HEK293 (cell line): ENCODE measurements at regions of chr6 and their contacts with region 1.

Region 1: GRCh38 chr6:43181942-43182860 is at the start of gene CUL9:
- H3K4me3 ChIP-seq: peak within 1 kb of the TSS; percentile 64
- H3K27ac ChIP-seq: peak within 1 kb of the TSS; percentile 59
- H3K4me1 ChIP-seq: peaks cover 3% of the 10 kb centered on the region; the same call in 1 of the 2 replicates
- CTCF ChIP-seq: peak; percentile 70

Region 2: GRCh38 chr6:43045371-43045930 is 136.8 kb before region 1 on chr6:
- CTCF ChIA-PET with region 1: no interaction called
- POLR2A ChIA-PET with region 1: no interaction called
- H3K4me3 ChIP-seq: no peak overlapping the region
- H3K27ac ChIP-seq: no peak overlapping the region
- H3K4me1 ChIP-seq: no peaks in the 10 kb centered on the region
- CTCF ChIP-seq: no peak

Region 3: GRCh38 chr6:43199912-43200311 is 17.7 kb after region 1 on chr6:
- CTCF ChIA-PET with region 1: no interaction called
- POLR2A ChIA-PET with region 1: interaction called, 12 read pairs
- H3K4me3 ChIP-seq: no peak overlapping the region
- H3K27ac ChIP-seq: no peak overlapping the region
- H3K4me1 ChIP-seq: no peaks in the 10 kb centered on the region
- CTCF ChIP-seq: no peak

Region 4: DNA sequence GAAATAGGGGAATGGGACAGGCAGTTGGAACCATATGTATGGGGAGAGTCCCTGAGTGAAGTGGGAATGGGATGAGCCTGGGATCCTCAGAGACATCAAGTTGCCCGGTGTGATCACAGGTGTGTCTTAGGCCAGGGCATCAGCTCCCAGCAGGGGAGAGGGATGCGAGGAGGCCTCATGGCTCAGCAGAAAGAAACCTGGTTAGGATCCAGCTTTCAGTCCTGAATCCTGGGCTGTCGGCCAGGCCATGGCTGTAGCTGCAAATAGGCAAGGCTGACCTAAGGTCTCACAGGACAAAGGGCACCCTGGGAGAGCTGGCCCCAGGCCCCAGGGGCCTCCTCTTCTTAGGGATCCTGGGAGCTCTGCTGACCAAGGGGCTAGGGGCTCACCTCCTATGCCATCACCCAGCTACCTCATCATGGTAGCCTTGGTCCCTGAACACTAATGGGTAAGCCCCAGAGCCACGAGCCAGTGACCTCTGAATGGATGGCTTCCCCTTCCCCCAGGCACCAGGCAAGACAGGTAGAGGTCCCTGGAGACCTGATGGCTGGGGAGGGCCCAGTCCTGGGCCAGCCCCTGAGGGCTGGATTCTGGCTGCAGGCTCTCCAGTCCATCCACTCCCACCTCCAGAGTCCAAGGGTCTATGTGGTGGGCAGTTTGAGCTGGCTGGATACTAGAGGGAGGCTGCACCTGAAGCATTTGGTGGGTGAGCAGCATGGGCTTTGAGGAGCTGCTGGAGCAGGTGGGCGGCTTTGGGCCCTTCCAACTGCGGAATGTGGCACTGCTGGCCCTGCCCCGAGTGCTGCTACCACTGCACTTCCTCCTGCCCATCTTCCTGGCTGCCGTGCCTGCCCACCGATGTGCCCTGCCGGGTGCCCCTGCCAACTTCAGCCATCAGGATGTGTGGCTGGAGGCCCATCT is 115.7 kb after region 1 on chr6 and contains the start of gene SLC22A7:
- CTCF ChIA-PET with region 1: no interaction called
- POLR2A ChIA-PET with region 1: no interaction called
- H3K4me3 ChIP-seq: no peak within 1 kb of the TSS
- H3K27ac ChIP-seq: no peak within 1 kb of the TSS
- H3K4me1 ChIP-seq: no peaks in the 10 kb centered on the region
- CTCF ChIP-seq: no peak